Mucosa of descending colon (tissue), 3 donors: ENCODE measurements at regions of chr5 and their contacts with region 1.

Region 1: DNA sequence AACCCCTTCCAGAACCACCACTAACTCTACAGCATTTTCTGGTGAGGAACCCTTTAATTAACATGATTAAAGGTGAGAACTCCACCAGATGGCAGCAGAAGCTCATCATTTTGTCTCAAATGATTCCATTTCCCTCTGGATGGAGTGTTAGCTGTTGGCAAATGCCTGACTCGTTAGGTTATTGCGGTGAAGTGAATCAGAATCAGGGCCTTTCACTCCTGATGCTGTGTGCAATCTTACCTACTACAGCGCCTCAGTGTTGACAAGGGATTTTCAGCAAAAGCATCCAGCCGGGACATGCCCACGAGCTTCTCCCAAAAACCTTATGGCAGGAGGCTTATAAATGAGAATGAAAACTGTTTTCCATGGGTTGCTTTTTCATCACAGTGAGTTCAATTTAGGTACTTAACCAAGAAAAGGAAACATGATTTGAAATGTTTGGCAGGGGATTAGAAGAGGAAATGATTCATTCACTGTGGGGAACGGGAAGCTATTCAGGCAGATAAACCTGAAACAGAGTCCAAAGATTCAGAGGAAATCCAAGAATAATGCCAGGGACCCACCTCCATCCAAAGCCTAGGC is 48.0 kb upstream of the CAST start:
- DNase-seq: peak in 1 of 3 donors; percentile 88
- ATAC-seq: peak; percentile 81
- H3K4me3 ChIP-seq: no peak overlapping the region
- H3K4me1 ChIP-seq: no peaks in the 10 kb centered on the region
- CTCF ChIP-seq: no peak

Region 2: GRCh38 chr5:96687812-96688453 is 73.7 kb after region 1 on chr5:
- intact Hi-C with region 1: loop called in 1 of 2 experiments (anchors 10 kb)
- DNase-seq: no peak
- ATAC-seq: peak; percentile 91
- H3K4me3 ChIP-seq: no peak overlapping the region
- H3K4me1 ChIP-seq: no peaks in the 10 kb centered on the region
- CTCF ChIP-seq: no peak